ENCODE measurements at regions of chr17 and their contacts with region 1.

Region 1: DNA sequence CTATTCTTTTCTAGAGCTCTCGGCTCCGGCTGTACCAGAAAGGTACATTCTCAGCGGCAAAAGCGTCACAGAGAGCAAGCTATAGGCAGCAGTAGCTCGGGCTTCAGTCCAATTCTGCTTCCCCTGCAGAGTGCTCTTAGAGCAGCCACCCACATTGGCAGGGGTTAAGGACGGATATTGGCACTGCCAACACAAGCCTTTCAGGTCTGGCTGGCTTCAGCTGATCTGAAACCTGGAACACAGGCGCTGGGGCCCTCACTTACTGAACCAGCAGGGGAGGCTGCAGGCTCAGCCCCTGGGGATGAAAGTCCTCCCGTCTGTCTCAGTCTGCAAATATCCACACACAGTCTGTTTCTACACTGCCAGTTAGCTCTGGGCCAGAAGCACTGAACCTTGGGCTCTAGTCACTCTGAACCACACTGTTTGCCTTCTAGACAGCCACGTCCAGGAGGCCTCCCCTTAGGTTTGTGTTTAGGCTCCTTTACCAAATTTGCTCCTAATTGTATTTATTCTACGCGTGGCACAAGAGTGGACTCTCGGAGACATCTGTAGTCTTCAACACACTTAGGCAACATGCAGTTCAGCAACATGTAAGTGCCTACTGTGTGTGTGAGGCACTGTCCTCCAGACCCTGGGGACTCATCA is 40.1 kb downstream of the HIC1 start:
- DNase-seq: peak in 1 of 2 donors; percentile 83
- H3K4me3 ChIP-seq: no peak overlapping the region
- H3K27ac ChIP-seq: peak overlapping the region; percentile 38 to 44
- H3K4me1 ChIP-seq: peaks cover 0 to 16% of the 10 kb centered on the region in 2 donors
- H3K27me3 ChIP-seq: no peaks in the 10 kb centered on the region
- CTCF ChIP-seq: peak; percentile 74 to 91 (median 88)

Region 2: GRCh38 chr17:2244545-2245525 is 149.8 kb after region 1 on chr17:
- intact Hi-C with region 1: loop called (anchors 1 kb)
- DNase-seq: peak; percentile 52 to 93
- H3K4me3 ChIP-seq: no peak overlapping the region
- H3K27ac ChIP-seq: peak overlapping the region; percentile 56 to 66
- H3K4me1 ChIP-seq: peaks cover 6 to 20% of the 10 kb centered on the region in 2 donors
- H3K27me3 ChIP-seq: no peaks in the 10 kb centered on the region
- CTCF ChIP-seq: peak; percentile 97 to 99 (median 98)

Region 3: DNA sequence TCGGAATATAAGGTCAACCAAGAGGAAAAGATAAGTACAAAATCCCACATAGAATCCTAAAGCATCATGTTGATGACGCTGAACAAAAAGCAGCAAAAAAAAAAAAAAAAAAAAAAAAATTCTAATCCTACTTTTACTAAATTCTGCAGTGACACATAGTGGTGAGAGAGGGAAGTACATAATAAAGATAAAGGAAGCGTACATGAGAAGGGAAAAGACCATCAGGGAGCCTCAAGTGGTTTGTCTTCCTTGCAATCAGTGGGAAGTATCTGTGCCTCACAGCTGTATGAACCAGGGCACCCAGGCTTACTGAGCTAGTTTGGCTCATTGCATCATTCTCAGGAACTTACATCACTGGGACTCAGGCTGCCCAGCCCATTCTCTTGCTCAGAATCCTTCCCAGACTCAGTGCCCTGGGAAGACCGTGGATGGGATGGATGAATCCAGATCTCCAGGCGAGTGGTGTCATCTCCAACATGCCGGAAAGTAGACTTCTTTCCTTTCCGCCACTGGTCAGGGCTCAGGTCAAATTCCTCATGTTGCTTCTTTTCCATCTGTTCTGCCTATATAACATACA is 187.4 kb after region 1 on chr17:
- intact Hi-C with region 1: loop called (anchors 2 kb)
- DNase-seq: peak in 1 of 2 donors; percentile 67
- H3K4me3 ChIP-seq: no peak overlapping the region
- H3K27ac ChIP-seq: no peak overlapping the region
- H3K4me1 ChIP-seq: no peaks in the 10 kb centered on the region
- H3K27me3 ChIP-seq: no peaks in the 10 kb centered on the region
- CTCF ChIP-seq: peak; percentile 49 to 66 (median 58)